H1 (cell line): ENCODE measurements at regions of chr11 and their contacts with region 1.

Region 1: GRCh38 chr11:46392421-46393230 is 1.1 kb upstream of the CHRM4 start:
- DNase-seq: peak in 1 of 2 experiments; percentile 97
- H3K4me3 ChIP-seq: peak overlapping the region; percentile 26 to 62 (median 40)
- H3K27ac ChIP-seq: no peak overlapping the region
- H3K4me1 ChIP-seq: peaks cover 3 to 17% (median 15%) of the 10 kb centered on the region in 4 experiments
- H3K27me3 ChIP-seq: peaks cover 19 to 43% (median 37%) of the 10 kb centered on the region in 4 experiments
- CTCF ChIP-seq: 0 out of 4 replicates have a peak, but pooled peaks of 1 of the 3 experiments have one; percentile 3
- EP300 ChIP-seq: peak in 1 of 2 experiments; percentile 34; a peak in 1 of 3 replicates
- POLR2A ChIP-seq: peak in 1 of 2 experiments; percentile 24; a peak in 1 of 3 replicates
- RAD21 ChIP-seq: peak in 1 of 2 experiments; percentile 23; a peak in 1 of 4 replicates

Region 2: GRCh38 chr11:46308631-46309419 is 83.8 kb before region 1 on chr11:
- CTCF ChIA-PET with region 1: interaction called, 13 read pairs
- POLR2A ChIA-PET with region 1: no interaction called
- DNase-seq: peak; percentile 60 to 89
- H3K4me3 ChIP-seq: no peak overlapping the region
- H3K27ac ChIP-seq: no peak overlapping the region
- H3K4me1 ChIP-seq: peaks cover 0 to 12% (median 7%) of the 10 kb centered on the region in 4 experiments; a peak in 6 of 7 replicates
- H3K27me3 ChIP-seq: no peaks in the 10 kb centered on the region
- CTCF ChIP-seq: peak; percentile 89 to 98 (median 94)
- EP300 ChIP-seq: no peak
- POLR2A ChIP-seq: no peak
- RAD21 ChIP-seq: peak; percentile 88 to 93

Region 3: DNA sequence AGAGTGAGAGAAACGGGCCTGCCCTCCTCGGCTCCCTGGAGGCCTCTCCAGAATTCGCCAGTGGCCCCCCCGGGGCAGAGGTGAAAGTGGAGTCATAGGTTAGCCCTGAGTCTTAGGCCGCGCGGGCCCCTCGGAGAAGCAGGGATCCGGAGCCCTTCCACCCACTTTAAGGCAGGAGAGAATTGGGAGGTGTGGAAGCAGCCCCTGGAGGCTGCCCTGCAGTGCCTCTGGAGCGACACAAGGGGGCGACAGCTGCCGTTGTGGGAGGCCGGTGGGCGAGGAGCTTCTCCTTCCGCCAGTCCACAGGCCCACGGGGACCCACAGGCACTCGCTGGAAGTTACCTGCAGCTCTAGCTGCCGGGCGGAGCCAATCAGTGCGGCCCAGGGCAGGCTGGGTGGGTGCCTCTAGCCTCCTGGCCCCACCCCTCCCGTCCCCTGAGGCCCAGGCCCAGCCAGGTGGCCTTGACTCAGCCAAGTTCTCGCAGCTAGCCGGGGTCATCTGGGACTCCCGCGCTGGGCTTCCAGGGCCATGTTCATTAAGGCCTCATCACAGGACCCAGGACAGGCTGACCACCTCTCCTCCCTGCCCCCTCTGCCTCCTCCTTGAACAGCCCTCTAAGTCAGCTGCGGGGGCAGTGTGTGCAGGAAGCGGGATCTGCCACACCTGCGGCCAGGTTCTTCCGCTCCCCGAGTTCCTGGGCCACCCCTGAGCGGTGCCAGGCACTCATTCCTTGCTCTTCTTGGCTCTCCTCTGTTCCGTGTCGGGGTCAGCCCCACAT is 40.4 kb before region 1 on chr11:
- CTCF ChIA-PET with region 1: interaction called, 42 read pairs
- POLR2A ChIA-PET with region 1: interaction called, 4 read pairs
- DNase-seq: peak in 1 of 2 experiments; percentile 92
- H3K4me3 ChIP-seq: no peak overlapping the region
- H3K27ac ChIP-seq: peak overlapping the region; percentile 29; the same call in 1 of the 2 replicates
- H3K4me1 ChIP-seq: peaks cover 7 to 38% (median 29%) of the 10 kb centered on the region in 4 experiments
- H3K27me3 ChIP-seq: no peaks in the 10 kb centered on the region
- CTCF ChIP-seq: peak; percentile 93 to 98 (median 96)
- EP300 ChIP-seq: no peak; a peak in 1 of 3 replicates
- POLR2A ChIP-seq: no peak
- RAD21 ChIP-seq: peak; percentile 69 to 77

Region 4: DNA sequence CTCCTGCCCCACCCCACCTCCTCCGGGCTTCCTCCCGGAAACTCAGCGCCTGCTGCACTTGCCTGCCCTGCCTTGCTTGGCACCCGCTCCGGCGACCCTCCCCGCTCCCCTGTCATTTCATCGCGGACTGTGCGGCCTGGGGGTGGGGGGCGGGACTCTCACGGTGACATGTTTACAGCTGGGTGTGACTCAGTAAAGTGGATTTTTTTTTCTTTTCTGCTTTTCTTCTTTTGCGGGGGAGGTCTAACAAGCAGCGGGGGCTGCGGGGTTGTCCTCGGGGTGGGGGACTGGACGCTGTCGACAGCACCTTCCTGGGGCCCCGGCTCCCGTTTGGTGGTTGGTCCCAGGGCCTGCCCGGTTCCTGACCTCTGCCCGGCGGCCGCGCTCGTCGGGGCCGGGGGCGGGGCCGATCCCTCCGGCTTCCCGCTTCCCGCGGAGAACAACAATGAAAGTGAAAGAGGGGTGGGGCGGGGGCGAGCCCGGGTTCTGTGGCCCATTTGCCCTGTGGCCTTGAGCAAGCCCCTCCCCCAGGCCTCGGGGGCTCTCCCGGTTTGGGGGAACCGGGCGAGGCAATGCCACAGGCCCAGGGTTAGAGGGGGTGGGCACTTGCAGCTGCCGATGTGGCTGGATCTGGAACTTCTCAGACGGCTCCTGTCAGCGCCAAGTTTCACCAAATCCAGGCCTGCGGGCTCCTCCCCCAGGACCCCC is 12.1 kb before region 1 on chr11:
- CTCF ChIA-PET with region 1: interaction called, 24 read pairs
- POLR2A ChIA-PET with region 1: interaction called, 35 read pairs
- DNase-seq: peak in 1 of 2 experiments; percentile 92
- H3K4me3 ChIP-seq: peak overlapping the region; percentile 63 to 95 (median 69)
- H3K27ac ChIP-seq: peak overlapping the region; percentile 53
- H3K4me1 ChIP-seq: peaks cover 0 to 16% (median 13%) of the 10 kb centered on the region in 4 experiments; a peak in 6 of 7 replicates
- H3K27me3 ChIP-seq: no peaks in the 10 kb centered on the region
- CTCF ChIP-seq: no peak
- EP300 ChIP-seq: peak in 1 of 2 experiments; percentile 25; a peak in 1 of 3 replicates
- POLR2A ChIP-seq: peak in 1 of 2 experiments; percentile 56; a peak in 2 of 3 replicates
- RAD21 ChIP-seq: no peak

Region 5: GRCh38 chr11:46489661-46490560 is 97.3 kb after region 1 on chr11:
- CTCF ChIA-PET with region 1: interaction called, 15 read pairs
- POLR2A ChIA-PET with region 1: interaction called, 3 read pairs
- DNase-seq: peak in 1 of 2 experiments; percentile 9
- H3K4me3 ChIP-seq: no peak overlapping the region
- H3K27ac ChIP-seq: no peak overlapping the region
- H3K4me1 ChIP-seq: no peaks in the 10 kb centered on the region
- H3K27me3 ChIP-seq: no peaks in the 10 kb centered on the region
- CTCF ChIP-seq: peak; percentile 13 to 77 (median 67)
- EP300 ChIP-seq: no peak
- POLR2A ChIP-seq: no peak
- RAD21 ChIP-seq: peak; percentile 51 to 68

Region 6: GRCh38 chr11:46537537-46538295 is 145.1 kb after region 1 on chr11:
- CTCF ChIA-PET with region 1: interaction called, 25 read pairs
- POLR2A ChIA-PET with region 1: no interaction called
- DNase-seq: peak; percentile 78 to 79
- H3K4me3 ChIP-seq: peak overlapping the region in 1 of 4 experiments; percentile 14; a peak in 2 of 8 replicates
- H3K27ac ChIP-seq: no peak overlapping the region
- H3K4me1 ChIP-seq: peaks cover 0 to 5% (median 5%) of the 10 kb centered on the region in 4 experiments; a peak in 6 of 7 replicates
- H3K27me3 ChIP-seq: no peaks in the 10 kb centered on the region
- CTCF ChIP-seq: peak; percentile 71 to 99 (median 93)
- EP300 ChIP-seq: peak in 1 of 2 experiments; percentile 61; a peak in 1 of 3 replicates
- POLR2A ChIP-seq: no peak
- RAD21 ChIP-seq: peak; percentile 95 to 96

Region 7: GRCh38 chr11:46658259-46658658 is 265.6 kb after region 1 on chr11:
- CTCF ChIA-PET with region 1: no interaction called
- POLR2A ChIA-PET with region 1: no interaction called
- DNase-seq: no peak
- H3K4me3 ChIP-seq: no peak overlapping the region
- H3K27ac ChIP-seq: no peak overlapping the region
- H3K4me1 ChIP-seq: no peaks in the 10 kb centered on the region
- H3K27me3 ChIP-seq: no peaks in the 10 kb centered on the region
- CTCF ChIP-seq: no peak
- EP300 ChIP-seq: no peak
- POLR2A ChIP-seq: no peak
- RAD21 ChIP-seq: no peak

Region 8: GRCh38 chr11:47241841-47242301 is 849.2 kb after region 1 on chr11:
- CTCF ChIA-PET with region 1: no interaction called
- POLR2A ChIA-PET with region 1: no interaction called
- DNase-seq: no peak
- H3K4me3 ChIP-seq: no peak overlapping the region
- H3K27ac ChIP-seq: no peak overlapping the region
- H3K4me1 ChIP-seq: no peaks in the 10 kb centered on the region
- H3K27me3 ChIP-seq: no peaks in the 10 kb centered on the region
- CTCF ChIP-seq: no peak
- EP300 ChIP-seq: no peak
- POLR2A ChIP-seq: peak in 1 of 2 experiments; percentile 49; a peak in 2 of 3 replicates
- RAD21 ChIP-seq: no peak